ENCODE measurements at regions of chr5 and their contacts with region 1.

Region 1: GRCh38 chr5:16616536-16617273 is at the start of gene RETREG1:
- DNase-seq: peak; percentile 81
- H3K4me3 Mint-ChIP-seq: peak within 1 kb of the TSS; percentile 94
- H3K27ac Mint-ChIP-seq: peak within 1 kb of the TSS; percentile 94
- H3K4me1 Mint-ChIP-seq: peaks cover 36% of the 10 kb centered on the region
- H3K27me3 Mint-ChIP-seq: no peaks in the 10 kb centered on the region
- total RNA-seq, gene RETREG1: 21.9 and 28.0 TPM in 2 replicates

Region 2: GRCh38 chr5:16626663-16627264 is 10.1 kb after region 1 on chr5:
- intact Hi-C with region 1: loop called (anchors 1 kb)
- DNase-seq: peak; percentile 39
- H3K4me3 Mint-ChIP-seq: peak overlapping the region; percentile 5
- H3K27ac Mint-ChIP-seq: peak overlapping the region; percentile 78
- H3K4me1 Mint-ChIP-seq: peaks cover 45% of the 10 kb centered on the region
- H3K27me3 Mint-ChIP-seq: no peaks in the 10 kb centered on the region